ENCODE measurements at regions of chr15 and their contacts with region 1.

Region 1: DNA sequence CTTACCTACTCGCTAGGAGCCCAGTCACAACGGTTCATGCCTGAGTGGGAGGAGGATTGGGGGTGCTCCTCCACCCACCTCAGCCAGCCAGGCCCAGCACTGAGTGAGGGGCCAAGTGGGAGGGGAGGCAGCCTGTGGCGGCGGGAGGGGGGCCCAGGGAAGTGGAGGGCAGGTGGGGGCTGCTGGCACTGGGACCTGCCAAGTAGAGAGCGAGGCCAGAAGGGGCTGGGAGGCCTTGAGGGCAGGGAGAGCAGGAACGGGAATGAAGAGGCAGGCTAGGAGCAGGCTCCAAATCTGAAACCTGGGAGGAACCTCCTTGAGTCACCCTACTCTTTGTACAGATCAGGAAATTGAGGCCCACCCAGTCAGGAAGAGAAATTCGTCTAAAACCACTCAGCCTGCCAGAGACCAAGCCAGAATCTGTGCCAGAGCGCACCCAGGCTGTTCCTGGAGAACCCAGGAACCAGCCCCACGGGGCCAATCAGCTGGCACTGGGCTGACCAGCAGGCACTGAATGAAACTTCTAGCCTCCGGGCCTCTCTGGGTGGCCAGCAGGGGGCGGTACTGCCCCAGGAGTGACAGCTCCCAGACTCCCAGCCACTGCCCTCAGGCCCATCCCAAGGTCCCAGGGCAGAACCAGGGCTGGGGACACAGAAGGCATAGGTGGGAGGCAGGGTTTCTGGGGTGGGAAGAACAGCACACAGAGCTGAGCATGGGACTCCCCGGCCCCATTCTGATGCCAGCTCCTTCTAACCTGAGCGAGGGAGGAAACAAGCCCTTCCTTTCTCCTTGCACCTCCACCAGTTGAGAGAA is 14.8 kb upstream of the CYP11A1 start:
- DNase-seq: peak; percentile 95
- ATAC-seq: peak; percentile 93
- H3K4me3 Mint-ChIP-seq: no peak overlapping the region
- H3K27ac Mint-ChIP-seq: no peak overlapping the region
- H3K4me1 Mint-ChIP-seq: peaks cover 12% of the 10 kb centered on the region
- H3K27me3 Mint-ChIP-seq: no peaks in the 10 kb centered on the region; the same call in 1 of the 2 replicates
- CTCF ChIP-seq: peak; percentile 95

Region 2: DNA sequence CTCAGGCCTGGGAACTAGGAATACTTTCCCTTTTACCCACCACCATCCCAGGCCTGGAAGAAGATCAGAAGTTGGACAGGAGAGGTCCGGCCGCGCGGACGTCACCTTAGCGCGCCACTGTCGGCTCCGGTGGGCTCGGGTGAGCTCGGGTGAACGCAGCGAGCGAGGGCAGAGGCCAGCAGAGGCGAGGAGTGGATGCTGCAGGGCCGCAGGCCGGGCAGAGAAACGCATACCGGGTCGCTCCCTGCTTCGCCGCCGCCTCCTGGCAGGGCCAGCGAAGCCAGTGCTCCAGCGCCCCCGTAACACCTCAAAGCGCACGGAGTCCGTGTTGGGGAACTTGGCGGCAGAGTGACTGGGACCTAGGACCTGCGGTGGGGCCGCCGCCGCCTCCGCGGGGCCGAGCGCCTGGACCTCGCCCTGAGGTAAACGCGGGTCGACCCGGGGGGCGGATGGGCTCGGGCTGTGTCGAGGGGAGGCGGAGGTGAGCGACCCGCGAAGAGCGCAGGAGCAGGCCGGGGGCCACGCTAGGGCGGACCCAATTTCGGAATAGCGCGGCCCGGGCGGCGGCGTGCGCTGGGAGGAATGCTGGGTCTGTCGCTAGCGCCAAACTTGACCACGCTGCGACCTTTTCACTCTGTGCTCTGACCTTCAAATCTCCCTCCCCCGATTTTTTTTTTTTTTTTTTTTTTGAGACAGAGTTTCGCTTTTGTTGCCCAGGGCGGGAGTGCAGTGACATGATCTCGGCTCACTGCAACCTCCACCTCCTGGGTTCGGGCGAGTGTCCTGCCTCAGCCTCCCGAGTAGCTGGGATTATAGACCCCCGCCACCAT is 16.4 kb before region 1 on chr15:
- CTCF ChIA-PET with region 1: interaction called, 13 read pairs
- POLR2A ChIA-PET with region 1: no interaction called
- DNase-seq: peak; percentile 67
- ATAC-seq: peak; percentile 75
- H3K4me3 Mint-ChIP-seq: peak overlapping the region; percentile 72
- H3K27ac Mint-ChIP-seq: peak overlapping the region; percentile 20; the same call in 1 of the 2 replicates
- H3K4me1 Mint-ChIP-seq: peaks cover 22% of the 10 kb centered on the region
- H3K27me3 Mint-ChIP-seq: peaks cover 29% of the 10 kb centered on the region
- CTCF ChIP-seq: no peak

Region 3: DNA sequence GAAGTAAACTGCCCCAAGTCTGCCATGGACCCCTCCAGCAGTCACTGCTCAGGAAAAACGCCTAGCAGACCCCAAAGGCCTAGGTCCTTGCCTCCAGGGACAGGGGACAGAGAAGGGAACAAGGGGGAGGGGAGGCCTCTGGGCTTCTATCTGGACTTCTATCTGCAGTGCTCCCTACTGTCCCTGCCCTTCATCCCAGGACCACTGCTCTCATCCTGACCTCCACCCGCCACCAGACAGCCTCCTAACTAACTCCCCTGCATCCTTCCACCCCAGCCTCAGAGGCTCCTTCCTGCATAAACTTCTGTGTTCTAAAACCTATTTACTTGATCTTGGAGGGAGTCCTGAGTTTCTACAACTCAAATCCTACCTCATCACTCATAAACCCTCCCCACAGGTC is 26.2 kb after region 1 on chr15:
- CTCF ChIA-PET with region 1: interaction called, 13 read pairs
- POLR2A ChIA-PET with region 1: no interaction called
- DNase-seq: no peak
- ATAC-seq: no peak
- H3K4me3 Mint-ChIP-seq: no peak overlapping the region
- H3K27ac Mint-ChIP-seq: peak overlapping the region; percentile 14; the same call in 1 of the 2 replicates
- H3K4me1 Mint-ChIP-seq: peaks cover 3% of the 10 kb centered on the region; the same call in 1 of the 2 replicates
- H3K27me3 Mint-ChIP-seq: no peaks in the 10 kb centered on the region
- CTCF ChIP-seq: no peak

Region 4: DNA sequence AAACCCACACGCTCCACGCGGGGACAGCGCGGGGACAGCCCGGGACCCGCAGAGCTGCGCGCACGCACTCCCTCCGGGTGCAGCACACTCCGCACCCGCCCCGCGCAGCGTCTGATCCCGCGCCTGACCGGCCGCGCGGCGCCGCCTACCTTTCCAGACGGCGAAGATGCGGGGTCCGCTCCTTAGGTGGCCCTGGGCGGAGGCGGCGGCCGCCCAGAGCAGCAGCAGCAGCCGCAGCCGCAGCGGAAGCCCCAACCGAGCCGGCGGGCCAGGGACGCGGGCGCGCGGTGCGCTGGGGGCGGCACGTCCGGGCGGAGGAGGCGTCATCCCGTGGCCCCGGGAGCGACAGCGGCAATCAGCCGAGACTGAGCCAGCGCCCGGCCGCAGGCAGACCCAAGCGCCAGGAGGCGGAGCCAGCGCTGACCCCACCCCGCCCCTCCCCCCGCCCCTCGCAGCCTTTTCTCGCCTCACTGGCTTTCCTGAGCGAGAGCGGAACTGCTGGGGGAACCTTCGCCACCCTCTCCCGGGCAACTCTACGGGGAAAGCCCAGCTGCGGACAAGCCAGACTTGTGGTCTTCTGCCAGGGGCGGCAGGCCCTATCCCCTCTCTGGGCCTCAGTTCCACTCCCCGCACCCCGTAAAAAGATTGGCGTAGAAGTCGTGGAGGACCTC is 51.5 kb after region 1 on chr15 and contains the start of gene SEMA7A:
- CTCF ChIA-PET with region 1: interaction called, 136 read pairs
- POLR2A ChIA-PET with region 1: interaction called, 7 read pairs
- DNase-seq: peak; percentile 81
- ATAC-seq: peak; percentile 80
- H3K4me3 Mint-ChIP-seq: peak within 1 kb of the TSS; percentile 69
- H3K27ac Mint-ChIP-seq: peak within 1 kb of the TSS; percentile 53; the same call in 1 of the 2 replicates
- H3K4me1 Mint-ChIP-seq: peaks cover 46% of the 10 kb centered on the region
- H3K27me3 Mint-ChIP-seq: peaks cover 32% of the 10 kb centered on the region
- CTCF ChIP-seq: no peak
- total RNA-seq, gene SEMA7A: 13.7 to 17.9 TPM (median 14.2 TPM) in 3 replicates

Region 5: DNA sequence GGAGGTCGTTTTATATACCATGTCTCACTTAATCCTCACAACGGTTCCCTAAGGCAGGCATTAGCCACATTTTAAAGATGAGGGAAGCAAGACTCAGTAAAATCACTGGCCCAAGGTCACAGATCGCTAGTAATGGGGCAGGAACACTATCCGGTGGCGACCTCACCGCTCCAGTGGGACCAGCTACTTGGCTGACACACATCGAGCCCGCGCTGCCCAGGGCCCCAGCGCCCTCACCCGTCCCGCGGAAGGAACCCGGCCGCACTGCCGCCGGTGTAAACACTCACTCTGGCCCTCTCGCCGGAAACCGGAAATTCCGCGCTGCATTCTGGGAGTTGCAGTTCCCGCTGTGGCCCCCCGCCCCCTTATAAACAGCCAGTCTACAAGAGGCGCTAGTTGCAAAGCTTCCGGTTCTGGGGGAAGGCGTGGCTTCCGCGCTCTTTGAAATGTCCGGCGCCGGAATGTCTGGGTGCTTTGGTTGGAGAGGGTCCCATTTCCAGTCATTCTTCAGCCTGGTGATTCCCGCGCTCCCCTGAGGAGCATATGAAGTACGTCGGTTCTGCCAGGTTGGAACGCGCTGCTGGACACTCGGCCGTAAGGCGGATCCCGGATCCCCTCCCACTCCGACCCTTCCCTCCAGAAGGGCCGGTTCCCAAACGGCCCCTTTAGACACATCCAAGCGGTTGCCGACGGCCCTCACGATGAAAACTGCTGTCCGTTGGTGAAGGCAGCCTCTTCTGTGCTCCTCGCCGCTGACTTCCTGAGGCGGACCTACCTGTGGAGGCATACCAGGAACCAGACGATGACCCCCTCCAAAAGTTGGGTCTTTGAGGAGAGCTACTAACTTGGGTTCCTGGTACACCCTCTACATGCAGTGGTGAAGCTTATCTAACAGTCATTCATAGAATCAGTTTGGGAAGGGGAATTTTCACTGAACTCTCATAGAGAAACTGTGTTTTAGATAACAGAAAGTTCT is 78.9 kb after region 1 on chr15 and contains the start of gene UBL7:
- CTCF ChIA-PET with region 1: interaction called, 14 read pairs
- POLR2A ChIA-PET with region 1: interaction called, 5 read pairs
- DNase-seq: peak; percentile 99
- ATAC-seq: peak; percentile 93
- H3K4me3 Mint-ChIP-seq: peak within 1 kb of the TSS; percentile 98
- H3K27ac Mint-ChIP-seq: peak within 1 kb of the TSS; percentile 98
- H3K4me1 Mint-ChIP-seq: peaks cover 20% of the 10 kb centered on the region
- H3K27me3 Mint-ChIP-seq: no peaks in the 10 kb centered on the region
- CTCF ChIP-seq: no peak
- total RNA-seq, gene UBL7: 62.1 to 70.1 TPM (median 70.1 TPM) in 3 replicates

Region 6: DNA sequence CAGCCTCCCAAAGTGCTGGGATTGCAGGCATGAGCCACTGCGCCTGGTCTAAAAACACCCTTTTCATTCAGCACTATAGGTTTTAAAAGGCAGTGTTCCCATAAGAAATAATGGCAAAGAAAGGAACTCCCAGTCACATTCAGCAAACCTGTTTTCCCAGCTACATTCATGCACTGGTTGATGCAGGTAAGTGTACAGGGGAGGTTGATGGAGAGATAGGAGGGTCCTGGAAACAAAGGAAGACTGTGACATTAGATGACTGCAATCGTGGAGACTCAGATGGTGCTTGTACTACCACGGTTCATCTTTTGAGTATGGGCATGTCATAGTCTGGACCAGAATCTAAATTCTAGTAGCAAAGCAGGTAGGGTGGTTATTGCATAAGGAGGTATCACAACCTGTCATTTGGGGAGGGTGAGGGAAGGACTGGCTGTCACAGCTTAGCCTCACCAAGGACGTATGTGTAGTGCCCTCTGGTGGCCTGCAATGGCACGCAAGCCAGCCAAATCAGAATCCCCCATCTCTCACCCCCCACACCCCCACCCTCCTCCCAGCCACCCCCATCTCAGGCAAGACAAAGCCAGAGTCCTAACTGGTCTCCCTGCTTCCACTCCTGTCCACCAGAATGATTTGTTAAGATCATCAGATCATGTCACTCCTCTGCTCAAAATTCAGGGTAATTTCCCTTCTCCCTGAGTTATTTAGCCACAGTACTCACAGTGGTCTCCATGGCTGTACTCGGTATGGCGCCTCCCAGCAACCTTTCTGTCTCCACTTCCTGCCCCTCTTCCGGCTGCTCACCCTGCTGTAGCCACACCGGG is 107.5 kb after region 1 on chr15:
- CTCF ChIA-PET with region 1: interaction called, 11 read pairs
- POLR2A ChIA-PET with region 1: no interaction called
- DNase-seq: peak; percentile 84
- ATAC-seq: peak; percentile 94
- H3K4me3 Mint-ChIP-seq: peak overlapping the region; percentile 28; the same call in 1 of the 2 replicates
- H3K27ac Mint-ChIP-seq: peak overlapping the region; percentile 38
- H3K4me1 Mint-ChIP-seq: peaks cover 4% of the 10 kb centered on the region
- H3K27me3 Mint-ChIP-seq: no peaks in the 10 kb centered on the region
- CTCF ChIP-seq: peak; percentile 78